ENCODE measurements at regions of chrX and their contacts with region 1.

Region 1: GRCh38 chrX:120380699-120381098 is 18.8 kb downstream of the ATP1B4 start:
- DNase-seq: peak; percentile 29
- ATAC-seq: peak; percentile 81
- H3K4me3 ChIP-seq: no peak overlapping the region
- H3K27ac ChIP-seq: no peak overlapping the region
- H3K4me1 ChIP-seq: no peaks in the 10 kb centered on the region
- H3K27me3 ChIP-seq: no peaks in the 10 kb centered on the region
- CTCF ChIP-seq: peak; percentile 51 to 53 (median 51); a peak in 5 of 6 replicates
- POLR2A ChIP-seq: no peak
- RAD21 ChIP-seq: peak; percentile 67

Region 2: DNA sequence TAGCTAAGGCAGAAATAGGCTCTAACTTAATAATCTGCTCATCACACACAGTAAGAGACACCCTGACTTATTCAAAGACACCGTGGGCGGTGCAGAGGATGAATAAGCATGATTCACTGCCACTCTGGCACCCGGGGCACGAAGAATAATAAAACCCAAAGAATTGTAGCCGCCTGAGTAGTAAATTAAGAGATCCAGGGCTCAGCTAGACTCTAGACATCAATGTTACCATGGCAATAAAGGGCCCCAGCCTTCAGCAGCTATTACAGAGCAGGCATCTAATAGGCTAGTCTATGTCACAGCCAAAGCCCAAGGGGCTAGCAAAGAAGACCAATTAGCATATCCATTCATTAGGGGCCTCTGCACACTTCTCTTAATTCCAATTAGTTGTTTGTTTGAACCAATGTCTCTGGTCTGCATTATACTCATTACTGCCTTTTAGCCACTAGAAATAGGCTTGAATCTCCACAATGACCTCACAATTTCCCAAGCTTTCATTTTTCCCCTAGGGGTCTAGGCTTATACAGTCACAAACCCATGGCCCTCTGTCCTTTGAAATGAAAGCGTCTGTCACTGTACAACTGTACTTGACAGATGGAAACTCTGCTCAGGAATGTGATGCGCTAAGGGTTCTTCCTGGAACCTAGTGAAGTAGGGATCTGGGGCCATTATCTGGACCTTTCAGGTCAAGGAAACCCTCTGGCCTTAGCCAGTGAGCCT is 21.8 kb before region 1 on chrX:
- CTCF ChIA-PET with region 1: no interaction called
- POLR2A ChIA-PET with region 1: no interaction called
- RAD21 ChIA-PET with region 1: no interaction called
- intact Hi-C with region 1: no loop called
- DNase-seq: no peak
- ATAC-seq: peak; percentile 79
- H3K4me3 ChIP-seq: no peak overlapping the region
- H3K27ac ChIP-seq: no peak overlapping the region
- H3K4me1 ChIP-seq: peaks cover 0 to 11% of the 10 kb centered on the region in 2 experiments; a peak in 2 of 4 replicates
- H3K27me3 ChIP-seq: no peaks in the 10 kb centered on the region
- CTCF ChIP-seq: no peak
- POLR2A ChIP-seq: no peak
- RAD21 ChIP-seq: no peak

Region 3: DNA sequence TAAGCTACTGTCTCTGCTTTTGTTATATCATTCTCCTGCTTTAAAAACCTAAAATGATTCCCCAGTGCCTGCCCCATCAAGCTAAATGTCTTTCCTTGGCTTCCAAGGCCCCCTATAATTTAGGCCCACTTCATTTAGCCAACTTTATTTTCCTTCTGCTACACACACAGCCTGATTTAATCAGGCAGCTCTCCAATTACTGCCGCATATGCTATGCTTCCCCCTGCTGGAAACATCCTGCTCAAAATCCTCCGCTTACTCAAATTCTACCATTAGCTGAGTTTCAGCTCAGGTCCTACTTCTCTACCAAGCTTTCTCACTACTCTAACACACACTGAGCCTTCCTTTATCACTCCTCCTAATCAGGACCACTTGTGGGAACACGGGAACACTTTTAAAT is 71.4 kb after region 1 on chrX:
- CTCF ChIA-PET with region 1: interaction called, 15 read pairs
- POLR2A ChIA-PET with region 1: no interaction called
- RAD21 ChIA-PET with region 1: interaction called in 1 of 2 experiments, 3 read pairs
- intact Hi-C with region 1: loop called (anchors 5 kb)
- DNase-seq: no peak
- ATAC-seq: no peak
- H3K4me3 ChIP-seq: no peak overlapping the region
- H3K27ac ChIP-seq: no peak overlapping the region
- H3K4me1 ChIP-seq: no peaks in the 10 kb centered on the region
- H3K27me3 ChIP-seq: no peaks in the 10 kb centered on the region
- CTCF ChIP-seq: peak; percentile 11 to 30 (median 29); a peak in 2 of 6 replicates
- POLR2A ChIP-seq: no peak
- RAD21 ChIP-seq: peak; percentile 34; the same call in 1 of the 2 replicates

Region 4: DNA sequence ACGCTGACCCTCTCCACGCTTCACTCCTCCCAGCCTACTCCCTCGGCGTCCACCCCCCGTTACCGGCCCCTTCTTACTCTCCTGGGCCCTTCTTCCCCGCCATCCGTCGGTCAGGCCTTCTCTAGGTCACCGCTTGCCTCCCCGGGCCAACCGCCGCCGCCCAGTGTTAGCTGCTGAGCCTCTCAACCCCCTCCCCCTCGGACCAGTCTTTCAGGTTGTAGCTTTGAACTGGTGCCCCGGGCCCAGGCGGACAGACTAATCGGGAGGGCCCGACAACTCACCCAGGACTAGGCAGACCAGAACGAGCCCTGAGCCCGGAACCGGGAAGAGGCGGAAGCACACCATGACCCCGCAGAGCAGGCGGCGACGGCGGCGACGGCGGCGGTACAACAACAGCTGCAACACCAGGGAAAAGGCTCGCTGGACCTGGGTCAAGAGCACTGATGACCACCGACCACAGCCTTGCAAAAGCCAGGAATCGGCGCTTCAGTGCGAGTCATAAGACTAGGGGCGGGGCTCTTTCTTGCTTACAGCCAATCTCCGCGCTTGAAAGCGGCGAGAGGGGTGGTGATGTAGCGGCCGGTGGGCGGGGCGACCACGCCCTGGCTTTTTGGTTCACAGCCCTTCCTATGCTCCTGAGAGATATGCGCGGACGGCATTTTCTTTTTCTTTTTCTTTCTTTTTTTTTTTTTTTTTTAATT is 88.3 kb after region 1 on chrX and contains the start of gene LAMP2:
- CTCF ChIA-PET with region 1: no interaction called
- POLR2A ChIA-PET with region 1: no interaction called
- RAD21 ChIA-PET with region 1: no interaction called
- intact Hi-C with region 1: loop called (anchors 5 kb)
- DNase-seq: peak; percentile 69
- ATAC-seq: peak; percentile 94
- H3K4me3 ChIP-seq: peak within 1 kb of the TSS; percentile 70 to 71
- H3K27ac ChIP-seq: peak within 1 kb of the TSS; percentile 57
- H3K4me1 ChIP-seq: peaks cover 0 to 4% of the 10 kb centered on the region in 2 experiments; a peak in 1 of 4 replicates
- H3K27me3 ChIP-seq: no peaks in the 10 kb centered on the region
- CTCF ChIP-seq: no peak
- POLR2A ChIP-seq: peak; percentile 30
- RAD21 ChIP-seq: no peak
- total RNA-seq, gene LAMP2: 41.1 TPM

Region 5: GRCh38 chrX:120485638-120486520 is 105.2 kb after region 1 on chrX:
- CTCF ChIA-PET with region 1: interaction called, 12 read pairs
- POLR2A ChIA-PET with region 1: no interaction called
- RAD21 ChIA-PET with region 1: interaction called in 1 of 2 experiments, 4 read pairs
- intact Hi-C with region 1: no loop called
- DNase-seq: peak; percentile 80
- ATAC-seq: peak; percentile 91
- H3K4me3 ChIP-seq: peak overlapping the region; percentile 22 to 40
- H3K27ac ChIP-seq: peak overlapping the region; percentile 80
- H3K4me1 ChIP-seq: peaks cover 3 to 20% of the 10 kb centered on the region in 2 experiments; a peak in 3 of 4 replicates
- H3K27me3 ChIP-seq: no peaks in the 10 kb centered on the region
- CTCF ChIP-seq: peak; percentile 41 to 62 (median 53); a peak in 5 of 6 replicates
- POLR2A ChIP-seq: no peak
- RAD21 ChIP-seq: peak; percentile 41

Region 6: GRCh38 chrX:120536061-120536460 is 155.4 kb after region 1 on chrX:
- CTCF ChIA-PET with region 1: no interaction called
- POLR2A ChIA-PET with region 1: no interaction called
- RAD21 ChIA-PET with region 1: no interaction called
- intact Hi-C with region 1: no loop called
- DNase-seq: no peak
- ATAC-seq: no peak
- H3K4me3 ChIP-seq: no peak overlapping the region
- H3K27ac ChIP-seq: no peak overlapping the region
- H3K4me1 ChIP-seq: no peaks in the 10 kb centered on the region
- H3K27me3 ChIP-seq: no peaks in the 10 kb centered on the region
- CTCF ChIP-seq: no peak
- POLR2A ChIP-seq: no peak
- RAD21 ChIP-seq: no peak